Naive thymus-derived CD4-positive, alpha-beta T cell (primary cell): ENCODE measurements at regions of chr1 and their contacts with region 1.

Region 1: GRCh38 chr1:72623299-72623708 is 341.0 kb upstream of the NEGR1 start:
- DNase-seq: peak in 5 of 9 donors; percentile 4 to 18 (median 10)
- ATAC-seq: peak; percentile 68
- H3K4me3 ChIP-seq: no peak overlapping the region
- H3K4me3 Mint-ChIP-seq: peak overlapping the region in 9 of 10 donors; percentile 13 to 72 (median 45)
- H3K27ac ChIP-seq: no peak overlapping the region
- H3K27ac Mint-ChIP-seq: peak overlapping the region in 1 of 9 donors; percentile 51
- H3K4me1 ChIP-seq: no peaks in the 10 kb centered on the region
- H3K4me1 Mint-ChIP-seq: peaks cover 0 to 2% (median 0%) of the 10 kb centered on the region in 7 donors
- H3K27me3 ChIP-seq: no peaks in the 10 kb centered on the region
- H3K27me3 Mint-ChIP-seq: no peaks in the 10 kb centered on the region

Region 2: DNA sequence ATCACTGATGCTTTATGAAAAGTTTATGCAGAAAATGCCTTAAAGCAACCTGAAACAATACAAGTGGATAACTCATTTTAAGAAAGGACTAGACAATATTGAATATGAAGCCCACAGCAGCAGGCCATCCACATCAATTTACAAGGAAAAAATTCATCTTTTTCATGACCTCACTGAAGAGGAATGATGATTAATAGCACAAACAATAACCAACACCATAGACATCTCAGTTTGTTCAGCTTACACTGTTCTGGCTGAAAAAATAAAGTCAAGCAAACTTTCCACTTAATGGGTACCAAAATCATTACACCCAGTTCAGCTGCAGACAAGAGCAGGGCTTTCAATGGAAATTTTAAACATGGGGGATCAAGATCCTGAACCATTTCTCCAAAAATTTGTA is 39.6 kb after region 1 on chr1:
- CTCF ChIA-PET with region 1: no interaction called
- POLR2A ChIA-PET with region 1: no interaction called
- intact Hi-C with region 1: no loop called
- DNase-seq: no peak
- ATAC-seq: no peak
- H3K4me3 ChIP-seq: no peak overlapping the region
- H3K4me3 Mint-ChIP-seq: no peak overlapping the region
- H3K27ac ChIP-seq: no peak overlapping the region
- H3K27ac Mint-ChIP-seq: no peak overlapping the region
- H3K4me1 ChIP-seq: no peaks in the 10 kb centered on the region
- H3K4me1 Mint-ChIP-seq: no peaks in the 10 kb centered on the region
- H3K27me3 ChIP-seq: no peaks in the 10 kb centered on the region
- H3K27me3 Mint-ChIP-seq: no peaks in the 10 kb centered on the region

Region 3: GRCh38 chr1:73998348-73998959 is 1375.2 kb after region 1 on chr1:
- CTCF ChIA-PET with region 1: no interaction called
- POLR2A ChIA-PET with region 1: no interaction called
- intact Hi-C with region 1: loop called in 1 of 2 experiments (anchors 10 kb)
- DNase-seq: no peak
- ATAC-seq: no peak
- H3K4me3 ChIP-seq: no peak overlapping the region
- H3K4me3 Mint-ChIP-seq: no peak overlapping the region
- H3K27ac ChIP-seq: no peak overlapping the region
- H3K27ac Mint-ChIP-seq: no peak overlapping the region
- H3K4me1 ChIP-seq: no peaks in the 10 kb centered on the region
- H3K4me1 Mint-ChIP-seq: no peaks in the 10 kb centered on the region
- H3K27me3 ChIP-seq: no peaks in the 10 kb centered on the region
- H3K27me3 Mint-ChIP-seq: peaks cover 0 to 1% (median 0%) of the 10 kb centered on the region in 5 donors